Calu3 (cell line): ENCODE measurements at regions of chr1 and their contacts with region 1.

Region 1: DNA sequence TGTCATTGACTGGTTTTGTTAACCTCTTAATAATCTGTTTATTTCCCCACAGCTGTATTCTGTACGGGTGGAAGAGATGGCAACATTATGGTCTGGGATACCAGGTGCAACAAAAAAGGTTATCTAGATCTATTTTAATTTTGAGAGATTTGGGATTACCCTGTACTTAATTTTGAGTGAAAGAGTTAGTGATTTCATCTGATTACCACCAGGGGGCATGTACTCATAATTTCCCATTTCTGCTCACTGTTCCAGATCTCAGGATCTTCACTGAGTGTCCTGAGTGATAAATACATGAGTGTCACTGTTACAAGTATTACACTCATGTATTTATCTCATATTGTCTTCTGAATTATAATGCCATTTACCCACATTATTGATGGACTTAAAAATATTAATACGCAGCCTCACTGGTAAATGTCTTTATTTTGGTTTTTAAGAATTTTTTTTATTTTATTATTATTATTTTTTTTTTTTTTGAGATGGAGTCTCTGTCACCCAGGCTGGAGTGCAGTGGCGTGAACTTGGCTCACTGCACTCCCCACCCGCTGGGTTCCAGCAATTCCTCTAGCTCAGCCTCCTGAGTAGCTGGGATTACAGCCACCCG is 27.4 kb downstream of the DTL start:
- DNase-seq: no peak
- H3K4me3 Mint-ChIP-seq: no peak overlapping the region
- H3K27ac Mint-ChIP-seq: no peak overlapping the region
- H3K4me1 Mint-ChIP-seq: peaks cover 19% of the 10 kb centered on the region
- H3K27me3 Mint-ChIP-seq: no peaks in the 10 kb centered on the region
- CTCF ChIP-seq: peak; percentile 73

Region 2: DNA sequence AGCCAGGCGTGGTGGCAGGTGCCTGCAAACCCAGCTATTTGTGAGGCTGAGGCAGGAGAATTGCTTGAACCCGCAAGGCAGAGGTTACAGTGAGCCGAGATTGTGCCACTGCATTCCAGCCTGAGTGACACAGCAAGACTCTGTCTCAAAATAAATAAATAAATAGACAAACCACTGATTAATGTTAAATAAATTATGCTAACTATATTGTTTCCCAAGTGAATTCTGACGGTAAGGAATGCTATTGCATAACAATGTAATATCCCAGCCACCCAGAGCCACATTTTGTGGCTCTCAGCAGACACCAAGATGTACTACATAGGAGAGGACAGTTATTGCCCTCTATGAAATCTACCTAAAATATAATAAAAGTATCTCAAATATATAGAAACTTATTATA is 287.8 kb before region 1 on chr1:
- CTCF ChIA-PET with region 1: no interaction called
- intact Hi-C with region 1: no loop called
- DNase-seq: no peak
- H3K4me3 Mint-ChIP-seq: no peak overlapping the region
- H3K27ac Mint-ChIP-seq: no peak overlapping the region
- H3K4me1 Mint-ChIP-seq: no peaks in the 10 kb centered on the region
- H3K27me3 Mint-ChIP-seq: no peaks in the 10 kb centered on the region
- CTCF ChIP-seq: no peak

Region 3: DNA sequence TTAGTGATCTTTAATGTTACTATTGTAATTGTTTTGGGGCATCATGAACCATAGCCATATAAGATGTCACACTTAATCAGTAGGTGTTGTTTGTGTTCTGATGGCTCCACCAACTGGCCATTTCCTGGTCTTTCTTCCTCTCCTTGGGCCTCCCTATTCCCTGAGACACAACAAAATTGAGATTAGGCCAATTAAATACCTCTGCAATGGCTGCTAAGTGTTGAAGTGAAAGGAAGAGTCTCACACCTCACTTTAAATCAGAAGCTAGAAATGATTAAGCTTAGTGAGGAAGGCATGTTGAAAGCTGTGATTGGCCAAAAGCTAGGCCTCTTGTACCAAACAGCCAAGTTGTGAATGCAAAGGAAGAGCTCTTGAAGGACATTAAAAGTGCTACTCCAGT is 253.0 kb after region 1 on chr1:
- CTCF ChIA-PET with region 1: no interaction called
- intact Hi-C with region 1: loop called (anchors 2 kb)
- DNase-seq: peak; percentile 41
- H3K4me3 Mint-ChIP-seq: no peak overlapping the region
- H3K27ac Mint-ChIP-seq: peak overlapping the region; percentile 14
- H3K4me1 Mint-ChIP-seq: peaks cover 13% of the 10 kb centered on the region
- H3K27me3 Mint-ChIP-seq: no peaks in the 10 kb centered on the region
- CTCF ChIP-seq: peak; percentile 33

Region 4: DNA sequence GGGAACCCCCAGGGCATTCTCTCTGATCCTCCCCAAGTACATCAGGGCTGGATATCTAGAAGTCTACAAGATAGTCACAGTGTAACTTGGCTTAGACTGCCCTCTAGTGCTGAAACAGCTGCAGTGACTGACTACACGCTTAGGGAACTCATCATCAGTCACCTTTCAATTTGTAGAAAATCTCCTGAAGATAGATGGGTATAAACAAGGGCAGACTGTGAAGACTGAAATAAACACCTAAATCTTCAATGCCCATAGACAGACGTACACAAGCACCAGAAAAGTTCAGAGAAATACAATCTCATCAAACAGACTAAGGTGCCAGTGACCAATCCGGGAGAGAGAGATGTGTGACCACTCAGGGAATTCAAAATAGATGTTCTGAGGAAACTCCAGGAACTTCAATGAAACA is 305.1 kb after region 1 on chr1:
- CTCF ChIA-PET with region 1: no interaction called
- intact Hi-C with region 1: loop called (anchors 2 kb)
- DNase-seq: peak; percentile 66
- H3K4me3 Mint-ChIP-seq: no peak overlapping the region
- H3K27ac Mint-ChIP-seq: no peak overlapping the region
- H3K4me1 Mint-ChIP-seq: no peaks in the 10 kb centered on the region
- H3K27me3 Mint-ChIP-seq: no peaks in the 10 kb centered on the region
- CTCF ChIP-seq: peak; percentile 86